ENCODE measurements at regions of chr12 and their contacts with region 1.

Region 1: GRCh38 chr12:75933101-75933500 is 98.5 kb downstream of the PHLDA1 start:
- DNase-seq: no peak
- ATAC-seq: no peak
- H3K4me3 ChIP-seq: no peak overlapping the region
- H3K4me3 Mint-ChIP-seq: no peak overlapping the region
- H3K27ac ChIP-seq: no peak overlapping the region
- H3K27ac Mint-ChIP-seq: no peak overlapping the region
- H3K4me1 ChIP-seq: peaks cover 0 to 14% of the 10 kb centered on the region in 2 donors
- H3K4me1 Mint-ChIP-seq: peaks cover 0 to 26% (median 9%) of the 10 kb centered on the region in 7 donors
- H3K27me3 ChIP-seq: no peaks in the 10 kb centered on the region
- H3K27me3 Mint-ChIP-seq: peaks cover 0 to 16% (median 2%) of the 10 kb centered on the region in 5 donors

Region 2: DNA sequence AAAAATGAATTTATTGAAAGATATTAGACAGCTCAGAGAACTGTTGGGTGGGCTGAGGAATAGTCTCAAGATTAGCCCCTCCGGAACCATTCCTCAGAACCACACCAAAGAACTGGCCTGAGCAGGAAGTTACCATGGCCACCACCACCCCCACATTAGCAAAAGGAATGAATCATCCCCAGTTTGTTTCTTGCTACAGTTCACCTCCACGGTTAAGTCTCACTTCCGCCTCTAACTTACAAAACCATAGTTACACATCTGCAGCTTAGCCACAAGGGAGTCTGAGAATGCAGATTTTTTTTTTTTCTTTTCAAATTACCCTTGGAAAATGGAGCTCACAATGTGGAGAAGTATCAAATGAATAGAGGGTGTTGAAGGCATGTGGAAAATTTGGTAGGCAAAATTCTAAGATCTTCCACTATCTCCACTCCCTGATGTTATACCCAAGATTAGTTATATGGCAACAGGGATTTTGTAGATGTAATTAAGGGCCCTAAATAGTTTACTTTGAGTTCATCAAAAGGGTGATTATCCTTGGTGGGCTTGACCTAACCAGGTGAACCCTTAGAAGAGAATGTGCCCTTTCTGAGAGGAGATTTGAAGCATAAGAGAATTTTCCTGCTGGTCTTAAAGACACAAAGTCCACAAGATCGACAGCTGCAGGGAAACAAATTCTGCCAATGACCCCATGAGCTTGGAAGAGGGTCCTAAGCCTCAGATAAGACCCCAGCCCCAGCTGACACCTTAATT is 291.9 kb before region 1 on chr12:
- CTCF ChIA-PET with region 1: no interaction called
- POLR2A ChIA-PET with region 1: no interaction called
- intact Hi-C with region 1: loop called in 1 of 2 experiments (anchors 1 kb)
- DNase-seq: peak in 1 of 9 donors; percentile 55
- ATAC-seq: peak; percentile 74
- H3K4me3 ChIP-seq: no peak overlapping the region
- H3K4me3 Mint-ChIP-seq: peak overlapping the region in 1 of 10 donors; percentile 20
- H3K27ac ChIP-seq: no peak overlapping the region
- H3K27ac Mint-ChIP-seq: peak overlapping the region in 1 of 9 donors; percentile 53
- H3K4me1 ChIP-seq: peaks cover 0 to 11% of the 10 kb centered on the region in 2 donors
- H3K4me1 Mint-ChIP-seq: peaks cover 0 to 20% (median 0%) of the 10 kb centered on the region in 7 donors
- H3K27me3 ChIP-seq: no peaks in the 10 kb centered on the region
- H3K27me3 Mint-ChIP-seq: peaks cover 1 to 10% (median 6%) of the 10 kb centered on the region in 5 donors

Region 3: GRCh38 chr12:75814851-75815754 is 118.0 kb before region 1 on chr12:
- CTCF ChIA-PET with region 1: no interaction called
- POLR2A ChIA-PET with region 1: no interaction called
- intact Hi-C with region 1: loop called in 1 of 2 experiments (anchors 2 kb)
- DNase-seq: peak in 1 of 9 donors; percentile 5
- ATAC-seq: peak; percentile 34
- H3K4me3 ChIP-seq: no peak overlapping the region
- H3K4me3 Mint-ChIP-seq: no peak overlapping the region
- H3K27ac ChIP-seq: no peak overlapping the region
- H3K27ac Mint-ChIP-seq: no peak overlapping the region
- H3K4me1 ChIP-seq: peaks cover 0 to 7% of the 10 kb centered on the region in 2 donors
- H3K4me1 Mint-ChIP-seq: peaks cover 0 to 18% (median 0%) of the 10 kb centered on the region in 7 donors
- H3K27me3 ChIP-seq: no peaks in the 10 kb centered on the region
- H3K27me3 Mint-ChIP-seq: peaks cover 0 to 7% (median 5%) of the 10 kb centered on the region in 5 donors

Region 4: DNA sequence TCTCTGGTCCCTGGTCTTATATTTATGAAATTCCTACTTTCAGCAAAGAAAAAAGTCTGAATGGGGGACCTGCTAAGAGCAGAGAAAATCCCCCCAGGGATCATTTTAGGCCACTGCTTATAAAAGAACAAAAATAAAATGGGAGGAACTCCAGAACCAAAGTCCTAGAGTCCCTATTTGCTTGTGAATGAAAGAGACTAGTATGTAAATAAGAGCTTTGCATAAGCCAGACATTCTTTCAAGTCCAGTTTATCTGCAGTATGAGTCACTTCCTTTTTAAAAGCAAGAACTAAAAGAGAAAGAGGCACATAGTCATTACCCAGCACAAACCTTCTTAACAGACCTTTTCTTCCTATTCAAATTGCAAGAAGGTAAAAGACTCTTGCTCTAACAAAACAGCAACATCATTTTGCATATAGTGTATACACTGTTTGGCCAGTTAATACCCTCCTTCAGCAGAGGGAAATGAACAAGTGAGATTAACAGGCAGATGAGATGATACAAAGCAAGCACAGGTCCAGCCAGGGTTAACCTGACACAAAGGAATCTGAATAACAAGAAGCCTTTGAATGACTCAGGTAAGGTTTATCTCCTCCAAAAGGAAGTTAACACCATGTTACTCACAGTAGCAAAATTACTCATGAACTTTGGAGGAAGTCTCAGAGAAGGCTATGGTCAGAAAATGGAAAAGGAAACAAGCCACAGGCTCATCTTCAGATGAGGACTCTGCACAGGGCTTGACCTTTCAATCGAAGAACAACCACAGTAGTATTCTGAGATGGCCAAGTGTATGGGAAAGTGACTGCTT is 11.2 kb after region 1 on chr12:
- CTCF ChIA-PET with region 1: no interaction called
- POLR2A ChIA-PET with region 1: no interaction called
- intact Hi-C with region 1: loop called in 1 of 2 experiments (anchors 1 kb)
- DNase-seq: peak in 1 of 9 donors; percentile 35
- ATAC-seq: peak; percentile 87
- H3K4me3 ChIP-seq: no peak overlapping the region
- H3K4me3 Mint-ChIP-seq: peak overlapping the region in 2 of 10 donors; percentile 61 to 83
- H3K27ac ChIP-seq: no peak overlapping the region
- H3K27ac Mint-ChIP-seq: peak overlapping the region in 5 of 9 donors; percentile 40 to 97 (median 74)
- H3K4me1 ChIP-seq: peaks cover 0 to 16% of the 10 kb centered on the region in 2 donors
- H3K4me1 Mint-ChIP-seq: peaks cover 7 to 28% (median 11%) of the 10 kb centered on the region in 7 donors
- H3K27me3 ChIP-seq: no peaks in the 10 kb centered on the region
- H3K27me3 Mint-ChIP-seq: no peaks in the 10 kb centered on the region